ENCODE measurements at regions of chr11 and their contacts with region 1.

Region 1: DNA sequence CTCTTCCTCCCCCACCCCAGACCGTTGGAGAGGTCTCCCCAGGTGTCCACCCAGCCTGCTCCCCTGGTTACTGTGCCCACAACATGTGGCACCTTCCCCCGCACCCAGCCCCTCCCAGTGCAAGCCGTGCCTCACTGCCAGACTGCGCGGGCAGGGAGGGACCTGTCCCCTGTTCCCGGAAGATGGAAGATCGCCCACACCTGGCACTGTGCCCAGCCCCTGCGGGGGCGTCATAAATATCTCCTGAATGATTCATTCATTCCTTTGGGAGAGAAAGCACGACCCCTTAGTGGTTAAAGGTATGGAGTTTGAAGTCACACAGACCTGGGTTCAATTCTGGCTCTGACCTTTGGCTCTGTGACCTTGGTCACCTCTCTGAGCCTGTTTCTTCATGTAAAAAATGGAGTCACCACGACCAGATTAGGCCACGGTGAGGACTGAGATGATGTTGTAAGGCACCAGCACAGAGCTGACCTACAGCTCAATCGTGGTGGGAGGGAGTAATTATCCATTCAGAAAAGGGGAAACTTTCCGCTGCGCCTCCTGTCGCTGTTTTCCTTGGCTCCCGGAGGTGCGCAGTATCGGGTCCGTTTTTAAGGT is 506 bp upstream of the SYT12 start:
- DNase-seq: no peak
- H3K4me3 ChIP-seq: peak overlapping the region; percentile 29 to 61 (median 40); a peak in 7 of 8 replicates
- H3K27ac ChIP-seq: no peak overlapping the region
- H3K4me1 ChIP-seq: peaks cover 2 to 9% (median 7%) of the 10 kb centered on the region in 4 experiments; a peak in 6 of 7 replicates
- H3K27me3 ChIP-seq: peaks cover 24 to 37% (median 29%) of the 10 kb centered on the region in 4 experiments
- CTCF ChIP-seq: no peak
- EP300 ChIP-seq: no peak
- POLR2A ChIP-seq: no peak
- RAD21 ChIP-seq: no peak

Region 2: DNA sequence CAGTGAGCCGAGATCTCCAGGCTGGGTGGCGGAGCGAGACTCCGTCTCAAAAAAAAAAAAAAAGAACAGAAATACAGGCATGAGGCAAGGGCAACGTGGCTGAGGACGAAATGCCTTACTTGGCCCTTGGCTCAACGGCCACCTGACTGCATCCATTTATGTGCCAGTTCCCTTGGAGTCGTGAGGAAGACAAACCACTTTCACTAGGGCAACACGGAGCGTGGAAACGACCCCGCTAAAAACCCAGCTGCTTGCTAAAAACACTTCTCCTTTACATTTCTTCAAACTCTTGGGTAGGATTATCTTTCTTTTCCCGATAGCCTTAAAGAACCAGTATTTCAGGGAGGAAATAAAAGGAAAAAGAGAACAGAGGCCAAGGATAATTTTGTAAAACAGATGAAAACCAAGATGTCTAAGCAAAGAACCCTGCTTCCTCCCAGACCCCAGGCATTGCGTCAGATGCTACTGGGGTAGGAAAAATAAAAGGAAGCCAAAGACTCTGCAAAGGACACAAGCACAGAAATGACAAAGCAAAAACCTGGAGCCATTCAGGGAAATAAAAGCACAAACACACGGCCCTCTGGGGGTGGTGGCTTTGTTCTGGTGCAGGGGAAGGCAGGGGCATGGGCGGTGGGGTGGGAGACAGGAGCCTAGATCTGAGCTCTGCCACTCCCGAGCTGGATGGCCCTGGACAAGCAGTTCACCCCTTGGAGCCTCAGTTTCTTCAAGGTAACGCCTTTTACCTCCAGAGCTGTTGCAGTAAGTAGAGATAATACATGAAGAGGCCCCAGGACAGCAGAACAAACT is 101.2 kb before region 1 on chr11:
- CTCF ChIA-PET with region 1: interaction called, 10 read pairs
- POLR2A ChIA-PET with region 1: no interaction called
- DNase-seq: no peak
- H3K4me3 ChIP-seq: no peak overlapping the region
- H3K27ac ChIP-seq: peak overlapping the region; percentile 20; the same call in 1 of the 2 replicates
- H3K4me1 ChIP-seq: peaks cover 0 to 4% (median 0%) of the 10 kb centered on the region in 4 experiments; a peak in 2 of 7 replicates
- H3K27me3 ChIP-seq: no peaks in the 10 kb centered on the region
- CTCF ChIP-seq: no peak
- EP300 ChIP-seq: no peak
- POLR2A ChIP-seq: no peak
- RAD21 ChIP-seq: no peak

Region 3: GRCh38 chr11:67006139-67006884 is 16.1 kb before region 1 on chr11:
- CTCF ChIA-PET with region 1: interaction called, 10 read pairs
- POLR2A ChIA-PET with region 1: interaction called, 6 read pairs
- DNase-seq: peak in 1 of 2 experiments; percentile 80
- H3K4me3 ChIP-seq: no peak overlapping the region
- H3K27ac ChIP-seq: no peak overlapping the region
- H3K4me1 ChIP-seq: peaks cover 7 to 17% (median 12%) of the 10 kb centered on the region in 4 experiments
- H3K27me3 ChIP-seq: no peaks in the 10 kb centered on the region
- CTCF ChIP-seq: no peak
- EP300 ChIP-seq: no peak
- POLR2A ChIP-seq: peak in 1 of 2 experiments; percentile 42; a peak in 1 of 3 replicates
- RAD21 ChIP-seq: no peak

Region 4: GRCh38 chr11:67090717-67091116 is 68.3 kb after region 1 on chr11:
- CTCF ChIA-PET with region 1: no interaction called
- POLR2A ChIA-PET with region 1: no interaction called
- DNase-seq: no peak
- H3K4me3 ChIP-seq: no peak overlapping the region
- H3K27ac ChIP-seq: no peak overlapping the region
- H3K4me1 ChIP-seq: peaks cover 0 to 3% (median 1%) of the 10 kb centered on the region in 4 experiments; a peak in 2 of 7 replicates
- H3K27me3 ChIP-seq: no peaks in the 10 kb centered on the region
- CTCF ChIP-seq: no peak
- EP300 ChIP-seq: no peak
- POLR2A ChIP-seq: no peak
- RAD21 ChIP-seq: no peak